B cell (primary cell): ENCODE measurements at regions of chr19 and their contacts with region 1.

Region 1: GRCh38 chr19:45886427-45887199 is 672 bp upstream of the IRF2BP1 start:
- DNase-seq: peak; percentile 94
- ATAC-seq: peak; percentile 68
- H3K4me3 ChIP-seq: peak overlapping the region; percentile 68 to 86 (median 78)
- H3K4me3 Mint-ChIP-seq: peak overlapping the region; percentile 95
- H3K27ac ChIP-seq: peak overlapping the region; percentile 83 to 90
- H3K27ac Mint-ChIP-seq: peak overlapping the region; percentile 94
- H3K4me1 ChIP-seq: peaks cover 24 to 39% of the 10 kb centered on the region in 2 donors
- H3K4me1 Mint-ChIP-seq: peaks cover 28% of the 10 kb centered on the region
- H3K27me3 ChIP-seq: no peaks in the 10 kb centered on the region
- H3K27me3 Mint-ChIP-seq: no peaks in the 10 kb centered on the region
- CTCF ChIP-seq: no peak

Region 2: GRCh38 chr19:45506246-45506990 is 380.2 kb before region 1 on chr19:
- CTCF ChIA-PET with region 1: no interaction called
- POLR2A ChIA-PET with region 1: no interaction called
- intact Hi-C with region 1: loop called (anchors 5 kb)
- DNase-seq: peak; percentile 98
- ATAC-seq: peak; percentile 74
- H3K4me3 ChIP-seq: peak overlapping the region; percentile 63 to 96 (median 84)
- H3K4me3 Mint-ChIP-seq: peak overlapping the region; percentile 94
- H3K27ac ChIP-seq: peak overlapping the region; percentile 83 to 87
- H3K27ac Mint-ChIP-seq: peak overlapping the region; percentile 94
- H3K4me1 ChIP-seq: peaks cover 26 to 43% of the 10 kb centered on the region in 2 donors
- H3K4me1 Mint-ChIP-seq: peaks cover 54% of the 10 kb centered on the region
- H3K27me3 ChIP-seq: no peaks in the 10 kb centered on the region
- H3K27me3 Mint-ChIP-seq: no peaks in the 10 kb centered on the region
- CTCF ChIP-seq: peak; percentile 63

Region 3: DNA sequence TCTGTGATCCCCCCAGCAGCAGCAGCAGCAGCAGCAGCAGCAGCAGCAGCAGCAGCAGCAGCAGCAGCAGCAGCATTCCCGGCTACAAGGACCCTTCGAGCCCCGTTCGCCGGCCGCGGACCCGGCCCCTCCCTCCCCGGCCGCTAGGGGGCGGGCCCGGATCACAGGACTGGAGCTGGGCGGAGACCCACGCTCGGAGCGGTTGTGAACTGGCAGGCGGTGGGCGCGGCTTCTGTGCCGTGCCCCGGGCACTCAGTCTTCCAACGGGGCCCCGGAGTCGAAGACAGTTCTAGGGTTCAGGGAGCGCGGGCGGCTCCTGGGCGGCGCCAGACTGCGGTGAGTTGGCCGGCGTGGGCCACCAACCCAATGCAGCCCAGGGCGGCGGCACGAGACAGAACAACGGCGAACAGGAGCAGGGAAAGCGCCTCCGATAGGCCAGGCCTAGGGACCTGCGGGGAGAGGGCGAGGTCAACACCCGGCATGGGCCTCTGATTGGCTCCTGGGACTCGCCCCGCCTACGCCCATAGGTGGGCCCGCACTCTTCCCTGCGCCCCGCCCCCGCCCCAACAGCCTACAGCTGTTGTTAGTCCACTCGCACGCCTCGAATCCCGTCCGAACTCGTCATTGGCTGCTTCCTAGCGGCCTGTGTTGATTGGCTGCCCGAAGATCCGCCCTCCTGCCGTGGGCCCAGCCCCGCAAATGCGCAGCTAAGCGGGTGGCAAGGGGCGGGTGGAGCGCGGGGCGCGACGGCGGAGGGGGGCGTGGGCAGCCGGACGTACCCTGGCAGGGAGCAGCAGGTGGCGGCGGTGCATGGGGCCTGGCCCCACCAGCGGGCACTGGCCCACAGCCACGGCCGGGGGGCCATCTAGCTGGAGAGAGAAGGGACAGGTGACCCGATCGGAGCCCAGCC is 116.2 kb before region 1 on chr19:
- CTCF ChIA-PET with region 1: interaction called, 10 read pairs
- POLR2A ChIA-PET with region 1: interaction called, 4 read pairs
- intact Hi-C with region 1: loop called (anchors 1 kb)
- DNase-seq: peak; percentile 95
- ATAC-seq: peak; percentile 68
- H3K4me3 ChIP-seq: peak overlapping the region in 4 of 5 experiments; percentile 71 to 88 (median 82)
- H3K4me3 Mint-ChIP-seq: peak overlapping the region; percentile 90
- H3K27ac ChIP-seq: peak overlapping the region; percentile 29 to 56
- H3K27ac Mint-ChIP-seq: peak overlapping the region; percentile 86
- H3K4me1 ChIP-seq: peaks cover 12 to 32% of the 10 kb centered on the region in 2 donors
- H3K4me1 Mint-ChIP-seq: peaks cover 29% of the 10 kb centered on the region
- H3K27me3 ChIP-seq: peaks cover 0 to 28% (median 8%) of the 10 kb centered on the region in 4 experiments
- H3K27me3 Mint-ChIP-seq: no peaks in the 10 kb centered on the region
- CTCF ChIP-seq: peak; percentile 96

Region 4: DNA sequence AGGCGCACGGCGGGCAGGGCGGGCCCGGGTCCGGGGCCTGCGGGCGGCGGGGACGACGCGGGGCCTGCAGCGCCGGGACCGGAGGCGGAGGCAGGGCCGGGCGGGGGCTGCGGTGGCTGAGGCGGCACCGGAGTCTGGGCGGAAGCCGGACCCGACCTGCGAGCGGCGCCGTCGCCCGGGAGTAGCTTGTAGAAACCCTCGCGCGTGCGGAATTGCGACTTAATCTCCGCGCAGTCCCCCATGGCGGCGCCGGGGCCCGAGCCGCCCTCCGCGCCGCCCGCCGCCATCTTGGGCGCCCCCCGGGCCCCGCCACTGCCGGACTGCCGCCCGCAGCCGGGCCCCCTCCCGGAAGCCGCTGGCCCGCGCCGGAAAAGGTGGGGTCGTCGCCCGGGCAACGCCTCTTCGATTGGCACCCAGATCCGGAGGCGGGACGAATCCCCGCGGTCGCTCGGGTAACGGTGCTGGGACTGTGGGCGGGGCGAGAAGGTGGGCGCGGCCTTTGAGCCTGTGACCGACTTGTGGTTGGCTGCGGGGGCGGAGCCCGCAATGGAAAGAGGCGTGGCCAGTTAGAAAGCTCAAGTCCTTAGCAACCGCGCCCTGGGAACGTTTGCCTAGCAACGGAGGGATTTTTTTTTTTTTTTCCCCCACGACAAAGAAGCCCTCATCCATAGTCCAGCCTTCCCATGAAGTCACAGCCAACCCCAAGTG is 94.0 kb before region 1 on chr19 and contains the start of gene DMWD:
- CTCF ChIA-PET with region 1: no interaction called
- POLR2A ChIA-PET with region 1: no interaction called
- intact Hi-C with region 1: no loop called
- DNase-seq: peak; percentile 99
- ATAC-seq: peak; percentile 97
- H3K4me3 ChIP-seq: peak within 1 kb of the TSS; percentile 40 to 73 (median 59)
- H3K4me3 Mint-ChIP-seq: peak within 1 kb of the TSS; percentile 93
- H3K27ac ChIP-seq: peak within 1 kb of the TSS; percentile 22 to 76
- H3K27ac Mint-ChIP-seq: peak within 1 kb of the TSS; percentile 92
- H3K4me1 ChIP-seq: peaks cover 24 to 29% of the 10 kb centered on the region in 2 donors
- H3K4me1 Mint-ChIP-seq: peaks cover 30% of the 10 kb centered on the region
- H3K27me3 ChIP-seq: no peaks in the 10 kb centered on the region
- H3K27me3 Mint-ChIP-seq: peaks cover 8% of the 10 kb centered on the region
- CTCF ChIP-seq: no peak
- total RNA-seq, gene DMWD: 86.4 and 91.2 TPM in 2 replicates

Region 5: DNA sequence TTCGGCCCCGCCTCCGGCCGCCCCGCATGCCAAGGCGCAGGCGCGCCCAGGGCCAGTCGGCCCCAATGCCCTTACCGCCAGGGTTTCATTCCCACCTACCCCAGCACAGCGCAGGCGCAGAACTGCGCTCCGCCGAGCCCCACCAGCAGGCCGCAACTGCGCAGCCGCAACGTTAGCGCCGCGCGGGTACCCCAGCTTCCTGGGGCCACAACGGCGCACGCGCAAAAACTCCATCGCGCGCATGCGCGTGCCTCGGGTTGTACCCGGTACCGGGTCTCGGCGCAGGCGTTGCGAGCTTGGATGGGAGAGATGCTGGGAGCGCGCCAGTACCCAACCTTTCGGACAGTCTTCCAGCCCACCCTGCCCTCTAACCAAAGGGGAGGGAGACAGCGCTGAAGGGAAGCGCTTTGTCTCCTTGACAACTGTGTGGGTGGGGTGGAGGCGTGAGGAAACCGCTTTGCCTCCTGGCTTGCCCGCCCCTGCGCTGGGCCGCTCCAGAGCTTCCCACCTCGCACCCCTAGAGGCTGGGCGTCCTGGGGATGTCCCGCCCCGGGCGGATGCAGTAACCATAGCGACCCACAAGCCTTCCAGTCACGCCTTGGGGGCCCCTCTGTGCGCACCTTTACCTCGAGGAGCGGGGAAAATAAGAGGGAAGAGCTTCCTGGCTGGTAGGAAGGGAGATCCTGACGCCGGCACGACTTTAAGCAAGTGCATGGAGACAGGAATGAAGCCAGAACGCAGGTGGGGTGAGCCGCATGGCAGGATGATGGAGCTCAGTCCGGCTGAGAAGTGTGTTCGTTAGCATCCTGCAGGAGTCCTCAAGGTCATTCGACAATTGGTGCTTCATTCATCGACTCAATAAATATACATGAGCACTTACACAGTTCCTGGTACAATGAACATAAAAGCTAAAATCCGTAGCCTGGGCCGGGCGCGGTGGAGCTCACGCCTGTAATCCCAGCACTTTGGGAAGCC is 16.3 kb after region 1 on chr19:
- CTCF ChIA-PET with region 1: interaction called, 4 read pairs
- POLR2A ChIA-PET with region 1: interaction called, 33 read pairs
- intact Hi-C with region 1: loop called (anchors 1 kb)
- DNase-seq: peak; percentile 100
- ATAC-seq: peak; percentile 83
- H3K4me3 ChIP-seq: peak overlapping the region; percentile 68 to 88 (median 74)
- H3K4me3 Mint-ChIP-seq: peak overlapping the region; percentile 89
- H3K27ac ChIP-seq: peak overlapping the region; percentile 64 to 70
- H3K27ac Mint-ChIP-seq: peak overlapping the region; percentile 95
- H3K4me1 ChIP-seq: peaks cover 16 to 21% of the 10 kb centered on the region in 2 donors
- H3K4me1 Mint-ChIP-seq: peaks cover 32% of the 10 kb centered on the region
- H3K27me3 ChIP-seq: no peaks in the 10 kb centered on the region
- H3K27me3 Mint-ChIP-seq: no peaks in the 10 kb centered on the region
- CTCF ChIP-seq: no peak

Region 6: DNA sequence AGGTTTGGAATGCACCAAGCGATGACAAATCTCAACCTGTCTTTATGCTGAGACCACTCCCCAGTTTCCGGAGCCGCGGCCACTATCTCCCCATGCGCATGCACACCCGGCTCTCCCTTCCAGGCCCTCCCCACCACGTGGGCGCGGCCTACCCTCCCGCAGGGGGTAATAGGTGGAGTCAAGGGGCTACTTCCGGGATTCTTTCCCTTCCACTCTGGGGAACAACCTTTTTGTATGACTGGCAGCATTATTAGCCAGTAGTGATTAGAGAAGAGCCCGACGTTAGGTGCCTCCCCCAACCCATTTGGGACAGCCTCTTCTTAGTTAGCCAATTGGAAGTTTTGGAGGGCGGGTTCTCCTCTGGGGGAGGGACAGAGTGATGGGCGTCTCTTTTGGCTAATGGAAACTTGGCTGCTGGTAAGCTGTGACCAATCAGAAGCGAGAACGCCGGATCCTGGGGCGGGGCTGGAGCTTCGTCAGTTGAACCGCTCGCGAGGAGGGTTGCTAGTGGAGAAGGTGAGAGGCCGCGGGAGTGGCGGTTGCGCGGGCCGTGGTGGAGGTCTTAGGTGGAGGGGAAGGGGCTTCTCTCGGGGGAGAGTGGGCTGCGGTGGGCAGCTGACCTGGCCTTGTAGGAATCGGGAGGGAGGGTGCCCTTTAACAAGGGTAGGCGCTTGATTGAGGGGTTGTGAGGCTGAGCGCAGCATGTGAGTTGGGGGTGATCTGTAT is 108.5 kb after region 1 on chr19 and contains the start of gene CCDC61:
- CTCF ChIA-PET with region 1: interaction called, 4 read pairs
- POLR2A ChIA-PET with region 1: no interaction called
- intact Hi-C with region 1: loop called (anchors 1 kb)
- DNase-seq: peak; percentile 99
- ATAC-seq: peak; percentile 93
- H3K4me3 ChIP-seq: peak within 1 kb of the TSS; percentile 71 to 92 (median 78)
- H3K4me3 Mint-ChIP-seq: peak within 1 kb of the TSS; percentile 58
- H3K27ac ChIP-seq: peak within 1 kb of the TSS; percentile 55 to 84
- H3K27ac Mint-ChIP-seq: no peak within 1 kb of the TSS
- H3K4me1 ChIP-seq: peaks cover 19 to 21% of the 10 kb centered on the region in 2 donors
- H3K4me1 Mint-ChIP-seq: peaks cover 27% of the 10 kb centered on the region
- H3K27me3 ChIP-seq: peaks cover 0 to 9% (median 5%) of the 10 kb centered on the region in 4 experiments
- H3K27me3 Mint-ChIP-seq: peaks cover 21% of the 10 kb centered on the region
- CTCF ChIP-seq: no peak
- total RNA-seq, gene CCDC61: 30.1 and 37.0 TPM in 2 replicates